ENCODE measurements at regions of chr7 and their contacts with region 1.

Region 1: DNA sequence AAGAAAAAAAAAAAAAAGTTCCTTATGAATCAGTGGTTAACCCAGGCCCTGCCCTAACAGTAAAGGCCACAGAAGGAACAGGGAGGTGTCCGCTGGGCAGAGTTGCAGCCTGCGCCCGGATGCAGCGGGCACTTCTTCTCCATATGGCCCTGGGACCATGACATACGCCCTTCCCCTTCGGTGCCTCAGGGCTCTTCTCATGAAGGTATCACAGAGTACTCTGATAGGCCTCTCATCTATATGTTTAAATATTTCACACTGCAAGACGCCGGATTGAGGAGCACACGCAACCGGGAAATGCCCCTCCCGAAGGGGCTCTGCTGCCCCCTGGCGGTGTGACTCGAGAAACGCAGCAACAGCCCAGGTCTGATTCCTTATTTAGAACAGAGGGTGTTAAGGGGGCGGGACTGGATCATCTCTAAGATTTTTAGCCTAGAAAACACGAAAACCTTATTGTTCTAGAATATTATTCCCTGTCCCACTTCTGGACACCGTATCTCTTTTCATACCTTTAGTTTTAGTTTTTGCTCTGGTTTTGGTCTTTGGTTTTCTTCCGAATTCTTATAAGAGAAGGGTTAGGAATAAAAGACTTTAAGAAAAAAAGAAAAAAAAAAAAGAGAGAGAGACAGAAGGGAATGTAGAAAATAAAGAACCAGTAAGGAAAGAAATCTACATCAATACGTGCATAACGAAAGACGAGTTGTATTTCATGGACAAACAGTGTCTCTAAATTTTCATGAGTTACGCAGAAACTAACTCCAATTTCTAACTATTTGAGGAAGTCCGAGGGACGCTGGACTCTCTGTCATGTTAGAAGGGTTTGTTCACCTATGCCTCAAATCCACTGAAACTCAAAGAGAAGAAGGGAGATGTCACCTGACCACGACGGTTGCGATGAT is 12.0 kb downstream of the DAGLB start:
- DNase-seq: peak; percentile 81 to 85
- ATAC-seq: peak; percentile 64 to 89 (median 84)
- H3K4me3 ChIP-seq: peak overlapping the region in 6 of 10 donors; percentile 18 to 37 (median 24)
- H3K27ac ChIP-seq: peak overlapping the region; percentile 18 to 86 (median 50)
- H3K4me1 ChIP-seq: peaks cover 0 to 76% (median 40%) of the 10 kb centered on the region in 9 donors
- H3K27me3 ChIP-seq: no peaks in the 10 kb centered on the region
- CTCF ChIP-seq: peak; percentile 93 to 99 (median 98)

Region 2: GRCh38 chr7:5854738-5855137 is 581.0 kb before region 1 on chr7:
- intact Hi-C with region 1: loop called in 3 of 10 experiments (anchors 10 kb)
- DNase-seq: no peak
- ATAC-seq: no peak
- H3K4me3 ChIP-seq: no peak overlapping the region
- H3K27ac ChIP-seq: no peak overlapping the region
- H3K4me1 ChIP-seq: peaks cover 0 to 5% (median 0%) of the 10 kb centered on the region in 9 donors
- H3K27me3 ChIP-seq: peaks cover 0 to 5% (median 0%) of the 10 kb centered on the region in 7 donors
- CTCF ChIP-seq: no peak

Region 3: GRCh38 chr7:5997222-5997808 is 438.4 kb before region 1 on chr7:
- intact Hi-C with region 1: loop called in 5 of 10 experiments (anchors 10 kb)
- DNase-seq: peak in 1 of 2 donors; percentile 60
- ATAC-seq: peak in 7 of 8 donors; percentile 53 to 79 (median 75)
- H3K4me3 ChIP-seq: no peak overlapping the region
- H3K27ac ChIP-seq: no peak overlapping the region
- H3K4me1 ChIP-seq: peaks cover 0 to 5% (median 0%) of the 10 kb centered on the region in 9 donors
- H3K27me3 ChIP-seq: no peaks in the 10 kb centered on the region
- CTCF ChIP-seq: peak; percentile 24 to 76 (median 67)

Region 4: GRCh38 chr7:6008668-6009611 is 426.8 kb before region 1 on chr7 and contains the starts of genes AIMP2 and PMS2:
- intact Hi-C with region 1: loop called in 2 of 10 experiments (anchors 10 kb)
- DNase-seq: peak; percentile 96 to 99
- ATAC-seq: peak; percentile 97 to 99 (median 98)
- H3K4me3 ChIP-seq: peak within 1 kb of the TSS; percentile 53 to 95 (median 73)
- H3K27ac ChIP-seq: peak within 1 kb of the TSS; percentile 72 to 98 (median 93)
- H3K4me1 ChIP-seq: peaks cover 5 to 49% (median 32%) of the 10 kb centered on the region in 9 donors
- H3K27me3 ChIP-seq: no peaks in the 10 kb centered on the region
- CTCF ChIP-seq: peak in 3 of 9 donors; percentile 20 to 33 (median 20)
- total RNA-seq, gene AIMP2: 41.3 to 76.4 (median 53.8) TPM
- total RNA-seq, gene PMS2: 5.1 to 8.9 (median 6.7) TPM

Region 5: DNA sequence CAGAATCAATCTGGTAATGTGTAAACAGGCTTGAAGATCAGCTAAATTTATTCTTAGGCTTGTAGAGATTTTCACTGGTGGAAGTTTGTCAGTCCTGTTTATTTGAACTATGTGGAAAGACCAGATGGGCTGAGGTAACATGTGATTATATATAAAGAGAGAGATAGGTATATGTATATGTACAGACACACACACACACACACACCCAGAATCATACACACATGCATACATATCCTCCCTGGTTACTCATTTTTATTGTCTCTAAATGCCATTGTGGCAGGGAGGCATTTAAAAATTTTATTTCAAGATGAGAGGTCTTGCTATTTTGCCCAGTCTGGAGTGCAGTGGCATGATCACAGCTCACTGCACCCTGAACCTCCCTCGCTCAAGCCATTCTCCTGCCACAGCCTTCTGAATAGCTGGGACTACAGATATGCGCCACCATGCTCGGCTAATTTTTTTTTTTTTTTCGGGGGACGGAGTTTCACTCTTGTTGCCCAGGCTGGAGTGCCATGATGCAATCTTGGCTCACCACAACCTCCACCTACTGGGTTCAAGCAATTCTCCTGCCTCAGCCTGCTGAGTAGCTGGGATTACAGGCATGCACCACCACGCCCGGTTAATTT is 85.2 kb before region 1 on chr7:
- intact Hi-C with region 1: loop called in 2 of 10 experiments (anchors 5 to 10 kb)
- DNase-seq: no peak
- ATAC-seq: no peak
- H3K4me3 ChIP-seq: no peak overlapping the region
- H3K27ac ChIP-seq: peak overlapping the region in 1 of 10 donors; percentile 27
- H3K4me1 ChIP-seq: peaks cover 0 to 32% (median 9%) of the 10 kb centered on the region in 9 donors
- H3K27me3 ChIP-seq: peaks cover 0 to 3% (median 0%) of the 10 kb centered on the region in 7 donors
- CTCF ChIP-seq: no peak

Region 6: GRCh38 chr7:6385110-6385971 is 50.4 kb before region 1 on chr7:
- intact Hi-C with region 1: loop called in 1 of 10 experiments (anchors 5 kb)
- DNase-seq: no peak
- ATAC-seq: peak in 7 of 8 donors; percentile 39 to 80 (median 62)
- H3K4me3 ChIP-seq: no peak overlapping the region
- H3K27ac ChIP-seq: peak overlapping the region in 9 of 10 donors; percentile 1 to 67 (median 25)
- H3K4me1 ChIP-seq: peaks cover 19 to 94% (median 79%) of the 10 kb centered on the region in 9 donors
- H3K27me3 ChIP-seq: no peaks in the 10 kb centered on the region
- CTCF ChIP-seq: no peak